Sciatic nerve (tissue), 2 donors: ENCODE measurements at regions of chr12 and their contacts with region 1.

Region 1: DNA sequence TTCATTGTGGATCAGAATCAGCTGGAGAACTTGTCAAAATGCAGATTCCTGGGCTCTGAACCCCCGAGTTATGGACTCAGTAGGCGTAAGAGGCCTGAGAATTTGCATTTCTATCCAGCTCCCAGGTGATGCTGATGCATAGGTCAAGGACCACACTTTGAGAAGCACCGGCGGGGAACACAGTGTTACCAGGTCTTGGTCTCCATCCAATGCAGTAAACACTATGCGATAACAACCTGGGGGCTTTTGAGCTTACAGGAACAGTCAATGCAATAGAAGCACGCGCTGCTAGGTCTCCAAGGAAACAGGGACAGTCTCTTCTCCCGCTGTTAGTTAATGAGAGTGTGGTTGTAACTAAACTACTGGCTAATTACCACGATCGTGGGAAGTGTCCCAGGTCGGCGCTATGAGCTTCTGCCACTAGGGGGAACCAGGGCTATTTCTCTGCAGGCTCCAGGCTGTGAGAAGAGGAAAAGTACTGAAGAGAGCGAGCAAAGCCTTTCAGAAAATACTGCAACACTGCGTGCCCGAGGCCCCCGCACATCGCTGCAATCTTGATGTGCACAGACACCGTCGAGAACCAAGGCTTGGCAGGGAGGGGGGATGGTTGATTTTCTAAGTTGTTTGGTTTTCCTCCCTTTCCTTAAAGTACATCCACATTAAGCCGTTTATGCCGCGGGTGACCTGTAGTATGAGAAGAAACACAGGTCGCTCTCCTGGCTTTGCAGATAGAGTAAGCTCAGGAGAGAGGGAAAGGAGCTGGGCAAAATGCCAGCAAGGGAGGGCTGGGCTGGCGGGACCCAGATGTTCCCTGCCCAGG is 52.0 kb upstream of the KCNA1 start:
- DNase-seq: peak; percentile 84
- ATAC-seq: peak; percentile 86

Region 2: GRCh38 chr12:4653257-4653656 is 204.4 kb before region 1 on chr12:
- intact Hi-C with region 1: no loop called
- DNase-seq: no peak
- ATAC-seq: no peak

Region 3: GRCh38 chr12:5003020-5003666 is 145.5 kb after region 1 on chr12:
- intact Hi-C with region 1: loop called (anchors 5 kb)
- DNase-seq: peak; percentile 70
- ATAC-seq: peak; percentile 79

Region 4: GRCh38 chr12:5083955-5084849 is 226.5 kb after region 1 on chr12:
- intact Hi-C with region 1: loop called (anchors 10 kb)
- DNase-seq: no peak
- ATAC-seq: peak; percentile 71